ENCODE measurements at regions of chr13 and their contacts with region 1.

Region 1: DNA sequence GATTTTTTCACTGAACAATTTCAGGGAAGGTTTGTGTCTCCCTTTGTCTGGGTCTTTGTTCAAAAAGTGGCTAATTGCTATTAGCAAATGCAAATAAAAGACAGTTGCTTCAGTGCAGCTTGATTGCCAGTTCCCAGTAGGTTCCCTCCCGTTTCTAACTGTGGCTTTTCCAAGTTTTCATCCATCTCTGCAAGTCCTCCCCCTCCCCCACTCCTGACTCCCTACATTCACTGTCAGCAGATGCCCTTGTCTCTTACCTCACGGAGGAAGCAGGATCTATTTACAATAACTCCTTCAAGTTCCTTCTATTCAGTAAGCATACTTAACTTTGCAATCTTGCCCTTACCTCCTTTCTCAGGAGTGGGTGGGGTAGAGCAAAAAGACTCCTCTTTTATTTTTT is 55.4 kb upstream of the SCEL start:
- DNase-seq: no peak
- ATAC-seq: no peak
- H3K4me3 ChIP-seq: no peak overlapping the region
- H3K4me3 Mint-ChIP-seq: no peak overlapping the region
- H3K27ac ChIP-seq: no peak overlapping the region
- H3K27ac Mint-ChIP-seq: no peak overlapping the region
- H3K4me1 ChIP-seq: peaks cover 0 to 3% of the 10 kb centered on the region in 2 experiments
- H3K4me1 Mint-ChIP-seq: peaks cover 6 to 10% (median 10%) of the 10 kb centered on the region in 3 donors
- H3K27me3 ChIP-seq: no peaks in the 10 kb centered on the region
- H3K27me3 Mint-ChIP-seq: no peaks in the 10 kb centered on the region

Region 2: GRCh38 chr13:77219401-77219800 is 260.7 kb before region 1 on chr13:
- CTCF ChIA-PET with region 1: interaction called in 1 of 2 experiments, 16 read pairs
- POLR2A ChIA-PET with region 1: no interaction called
- DNase-seq: no peak
- ATAC-seq: no peak
- H3K4me3 ChIP-seq: no peak overlapping the region
- H3K4me3 Mint-ChIP-seq: no peak overlapping the region
- H3K27ac ChIP-seq: no peak overlapping the region
- H3K27ac Mint-ChIP-seq: no peak overlapping the region
- H3K4me1 ChIP-seq: no peaks in the 10 kb centered on the region
- H3K4me1 Mint-ChIP-seq: peaks cover 17 to 21% (median 17%) of the 10 kb centered on the region in 3 donors
- H3K27me3 ChIP-seq: no peaks in the 10 kb centered on the region
- H3K27me3 Mint-ChIP-seq: no peaks in the 10 kb centered on the region

Region 3: GRCh38 chr13:77285098-77285497 is 195.0 kb before region 1 on chr13:
- CTCF ChIA-PET with region 1: interaction called, 7 to 10 read pairs
- POLR2A ChIA-PET with region 1: no interaction called
- DNase-seq: no peak
- ATAC-seq: no peak
- H3K4me3 ChIP-seq: no peak overlapping the region
- H3K4me3 Mint-ChIP-seq: no peak overlapping the region
- H3K27ac ChIP-seq: no peak overlapping the region
- H3K27ac Mint-ChIP-seq: no peak overlapping the region
- H3K4me1 ChIP-seq: no peaks in the 10 kb centered on the region
- H3K4me1 Mint-ChIP-seq: peaks cover 27 to 34% (median 28%) of the 10 kb centered on the region in 3 donors
- H3K27me3 ChIP-seq: no peaks in the 10 kb centered on the region
- H3K27me3 Mint-ChIP-seq: no peaks in the 10 kb centered on the region

Region 4: DNA sequence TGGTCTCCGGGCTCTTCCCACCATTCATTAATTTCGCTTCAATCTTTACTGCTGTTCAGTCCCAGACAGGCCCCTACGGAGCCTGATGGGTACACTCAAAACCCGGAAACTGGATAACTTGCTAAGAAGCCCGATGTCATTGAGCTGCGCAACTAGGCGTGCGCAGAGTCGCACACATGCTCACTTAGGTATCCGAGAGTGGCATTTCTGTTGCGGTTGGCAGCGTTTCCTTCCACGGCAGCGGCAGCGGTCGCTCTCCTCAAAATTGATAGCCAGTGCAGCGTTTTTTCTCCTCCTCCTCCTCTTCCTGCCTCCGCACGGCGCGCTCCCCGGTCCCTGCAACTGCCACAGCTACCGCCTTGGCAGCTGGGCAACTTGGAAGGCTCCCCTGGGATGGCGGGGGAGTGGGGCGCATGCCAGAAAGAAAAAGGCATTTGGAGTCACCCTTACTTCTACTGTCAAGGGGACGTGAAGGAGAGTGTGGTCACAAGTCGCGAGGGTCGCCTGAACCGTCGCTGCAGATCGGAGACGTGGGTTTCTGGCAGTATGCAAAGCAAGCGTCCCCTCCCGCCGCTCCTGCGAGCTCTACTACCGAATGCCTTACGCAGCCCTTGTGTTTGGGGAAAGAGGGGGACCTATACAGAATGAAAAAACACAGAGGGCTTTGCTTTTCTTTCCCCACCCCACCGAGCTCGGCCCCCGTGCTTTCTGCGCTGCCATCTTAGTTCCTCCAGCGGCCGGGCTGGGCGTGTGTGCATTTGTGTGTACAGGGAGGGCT is 150.7 kb before region 1 on chr13:
- CTCF ChIA-PET with region 1: interaction called, 8 to 35 read pairs
- POLR2A ChIA-PET with region 1: interaction called in 1 of 2 experiments, 13 read pairs
- DNase-seq: peak; percentile 70 to 98 (median 89)
- ATAC-seq: peak; percentile 61 to 68 (median 66)
- H3K4me3 ChIP-seq: peak overlapping the region; percentile 80 to 91
- H3K4me3 Mint-ChIP-seq: peak overlapping the region; percentile 94 to 100 (median 99)
- H3K27ac ChIP-seq: peak overlapping the region; percentile 81
- H3K27ac Mint-ChIP-seq: peak overlapping the region; percentile 99
- H3K4me1 ChIP-seq: peaks cover 12 to 33% of the 10 kb centered on the region in 2 experiments
- H3K4me1 Mint-ChIP-seq: peaks cover 42 to 52% (median 45%) of the 10 kb centered on the region in 3 donors
- H3K27me3 ChIP-seq: no peaks in the 10 kb centered on the region
- H3K27me3 Mint-ChIP-seq: no peaks in the 10 kb centered on the region

Region 5: DNA sequence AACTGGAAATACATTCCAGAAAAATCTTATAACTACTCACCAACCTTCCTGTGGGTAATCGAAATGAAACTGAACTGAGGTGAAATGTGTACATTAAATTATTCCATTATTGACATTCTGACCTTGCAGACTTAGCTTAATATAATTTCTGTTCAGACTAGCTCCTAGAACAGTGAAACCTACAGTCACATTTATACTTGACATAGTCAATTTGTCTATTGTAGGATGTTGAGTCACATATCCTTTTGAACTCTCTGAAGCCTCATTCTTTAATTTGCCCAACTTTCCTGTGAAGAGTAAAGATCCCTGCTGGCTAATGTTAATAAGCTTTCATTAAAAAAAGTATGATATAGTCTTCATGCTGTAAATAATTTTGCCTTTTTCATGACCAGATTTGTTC is 36.6 kb before region 1 on chr13:
- CTCF ChIA-PET with region 1: interaction called in 1 of 2 experiments, 13 read pairs
- POLR2A ChIA-PET with region 1: no interaction called
- DNase-seq: no peak
- ATAC-seq: no peak
- H3K4me3 ChIP-seq: no peak overlapping the region
- H3K4me3 Mint-ChIP-seq: no peak overlapping the region
- H3K27ac ChIP-seq: no peak overlapping the region
- H3K27ac Mint-ChIP-seq: no peak overlapping the region
- H3K4me1 ChIP-seq: no peaks in the 10 kb centered on the region
- H3K4me1 Mint-ChIP-seq: peaks cover 2 to 7% (median 3%) of the 10 kb centered on the region in 3 donors
- H3K27me3 ChIP-seq: no peaks in the 10 kb centered on the region
- H3K27me3 Mint-ChIP-seq: peaks cover 7 to 9% of the 10 kb centered on the region in 2 donors

Region 6: GRCh38 chr13:77637588-77637987 is 157.5 kb after region 1 on chr13:
- CTCF ChIA-PET with region 1: no interaction called
- POLR2A ChIA-PET with region 1: no interaction called
- DNase-seq: no peak
- ATAC-seq: no peak
- H3K4me3 ChIP-seq: no peak overlapping the region
- H3K4me3 Mint-ChIP-seq: no peak overlapping the region
- H3K27ac ChIP-seq: no peak overlapping the region
- H3K27ac Mint-ChIP-seq: no peak overlapping the region
- H3K4me1 ChIP-seq: no peaks in the 10 kb centered on the region
- H3K4me1 Mint-ChIP-seq: no peaks in the 10 kb centered on the region
- H3K27me3 ChIP-seq: no peaks in the 10 kb centered on the region
- H3K27me3 Mint-ChIP-seq: peaks cover 0 to 3% of the 10 kb centered on the region in 2 donors

Region 7: DNA sequence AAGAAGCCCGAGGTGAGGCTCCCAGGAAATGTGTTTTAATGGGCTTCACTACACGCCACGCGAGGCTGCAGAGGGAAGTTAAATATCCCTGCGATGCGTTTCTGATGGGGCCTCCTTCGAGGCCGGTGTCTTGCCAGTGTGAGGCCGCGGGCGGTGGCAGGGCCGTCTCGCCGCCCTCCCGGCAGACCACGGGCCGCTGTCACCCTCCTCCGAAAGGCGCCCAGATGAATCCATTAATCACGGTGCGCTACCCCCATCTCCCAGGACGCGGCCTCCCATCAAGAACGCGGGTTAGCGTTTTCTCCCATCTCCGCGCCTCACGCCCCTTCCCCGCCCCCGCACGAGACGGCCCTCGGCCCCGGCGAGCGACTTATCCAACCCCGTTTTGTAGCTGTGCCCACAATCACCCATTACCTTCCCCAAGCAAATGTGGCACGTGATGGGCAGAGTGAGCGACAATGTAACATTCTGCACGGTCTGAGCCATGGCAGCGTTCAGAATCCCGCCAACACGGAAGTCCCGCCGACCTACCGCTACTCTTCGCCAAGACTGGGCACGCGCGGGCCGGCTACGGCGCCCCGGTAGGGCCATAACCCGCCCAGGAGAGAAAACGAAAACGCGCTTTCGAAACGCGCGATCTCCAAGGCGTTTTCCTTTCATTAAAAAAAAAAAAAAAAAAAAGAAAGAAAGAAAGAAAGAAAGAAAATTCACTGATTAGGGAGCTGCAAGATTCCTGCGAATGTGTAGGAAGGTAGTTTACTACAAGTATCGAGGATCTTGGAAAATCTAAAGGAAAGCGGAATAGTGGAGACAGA is 1178.8 kb after region 1 on chr13 and contains the start of gene OBI1:
- CTCF ChIA-PET with region 1: no interaction called
- POLR2A ChIA-PET with region 1: no interaction called
- DNase-seq: peak; percentile 76 to 94 (median 88)
- ATAC-seq: peak; percentile 92 to 97 (median 94)
- H3K4me3 ChIP-seq: peak within 1 kb of the TSS; percentile 90 to 92
- H3K4me3 Mint-ChIP-seq: peak within 1 kb of the TSS; percentile 95 to 100 (median 95)
- H3K27ac ChIP-seq: peak within 1 kb of the TSS; percentile 53
- H3K27ac Mint-ChIP-seq: peak within 1 kb of the TSS; percentile 89 to 92
- H3K4me1 ChIP-seq: peaks cover 9 to 14% of the 10 kb centered on the region in 2 experiments
- H3K4me1 Mint-ChIP-seq: peaks cover 41 to 54% (median 45%) of the 10 kb centered on the region in 3 donors
- H3K27me3 ChIP-seq: no peaks in the 10 kb centered on the region
- H3K27me3 Mint-ChIP-seq: peaks cover 0 to 2% of the 10 kb centered on the region in 2 donors
- total RNA-seq, gene OBI1: 4.8 to 14.3 (median 12.3) TPM